Activated CD4-positive, alpha-beta memory T cell treated with anti-CD3 and anti-CD28 coated beads, Interleukin-2, amount 10 ng/mL, durations not matched to agents 7 days and 5 days (primary cell): ENCODE measurements at regions of chr2 and their contacts with region 1.

Region 1: GRCh38 chr2:68196120-68196716 is 38.5 kb downstream of the PNO1 start:
- DNase-seq: peak; percentile 31
- H3K4me3 Mint-ChIP-seq: no peak overlapping the region
- H3K27ac Mint-ChIP-seq: no peak overlapping the region
- H3K4me1 Mint-ChIP-seq: peaks cover 32% of the 10 kb centered on the region
- H3K27me3 Mint-ChIP-seq: no peaks in the 10 kb centered on the region

Region 2: DNA sequence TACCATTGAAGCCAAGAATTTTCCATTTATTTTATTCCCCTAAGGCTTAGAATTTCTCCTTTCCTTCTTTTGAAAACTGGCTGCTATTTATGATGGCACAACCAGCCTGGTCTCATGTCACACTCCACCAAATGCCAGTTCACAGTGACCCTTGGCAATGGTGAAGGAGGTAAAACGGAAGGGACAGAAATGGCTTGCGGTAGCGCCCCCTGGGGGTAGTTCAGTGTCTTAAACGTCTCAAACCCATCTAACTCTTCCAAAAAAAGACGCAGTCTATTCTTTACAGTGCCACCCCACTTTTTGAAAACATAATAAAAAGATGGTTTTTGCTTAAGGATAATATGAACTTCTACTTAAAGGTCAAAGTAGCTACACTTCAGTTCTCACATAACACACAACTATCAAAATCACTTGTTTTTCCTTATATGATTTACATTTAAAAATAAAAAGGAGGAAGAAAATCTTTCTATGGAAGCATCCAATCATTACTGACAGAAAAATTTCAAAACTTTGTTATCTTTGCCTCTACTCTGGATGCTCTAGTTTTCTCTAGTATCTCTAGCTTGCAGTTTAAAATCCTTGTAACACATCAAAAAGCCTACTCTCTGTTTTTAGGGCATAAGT is 10.6 kb before region 1 on chr2:
- CTCF ChIA-PET with region 1: interaction called, 22 read pairs
- POLR2A ChIA-PET with region 1: interaction called, 3 read pairs
- DNase-seq: peak; percentile 58
- H3K4me3 Mint-ChIP-seq: no peak overlapping the region
- H3K27ac Mint-ChIP-seq: no peak overlapping the region
- H3K4me1 Mint-ChIP-seq: peaks cover 24% of the 10 kb centered on the region
- H3K27me3 Mint-ChIP-seq: no peaks in the 10 kb centered on the region

Region 3: GRCh38 chr2:68225119-68225632 is 29.0 kb after region 1 on chr2:
- CTCF ChIA-PET with region 1: interaction called, 17 read pairs
- POLR2A ChIA-PET with region 1: no interaction called
- DNase-seq: no peak
- H3K4me3 Mint-ChIP-seq: no peak overlapping the region
- H3K27ac Mint-ChIP-seq: no peak overlapping the region
- H3K4me1 Mint-ChIP-seq: peaks cover 36% of the 10 kb centered on the region
- H3K27me3 Mint-ChIP-seq: no peaks in the 10 kb centered on the region

Region 4: DNA sequence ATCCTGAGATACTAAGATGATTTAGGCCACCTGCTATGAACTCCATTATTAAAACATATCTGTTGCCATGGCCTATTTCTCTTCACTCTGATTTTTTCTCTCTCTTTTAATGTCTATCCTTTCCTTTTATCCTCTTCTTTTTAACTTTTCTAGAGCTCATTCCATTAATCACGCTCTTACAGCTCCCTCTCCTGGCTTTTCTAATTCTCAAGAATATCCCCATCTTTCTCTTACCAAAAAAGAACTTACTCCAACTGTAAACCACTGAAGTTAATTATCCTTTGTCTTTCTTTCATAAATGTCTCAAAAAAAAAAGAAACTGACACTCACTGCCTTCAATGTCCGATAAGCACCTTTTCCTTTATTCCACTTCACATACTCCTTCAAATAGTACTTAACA is 48.2 kb after region 1 on chr2:
- CTCF ChIA-PET with region 1: interaction called, 28 read pairs
- POLR2A ChIA-PET with region 1: interaction called, 3 read pairs
- DNase-seq: no peak
- H3K4me3 Mint-ChIP-seq: no peak overlapping the region
- H3K27ac Mint-ChIP-seq: no peak overlapping the region
- H3K4me1 Mint-ChIP-seq: peaks cover 20% of the 10 kb centered on the region
- H3K27me3 Mint-ChIP-seq: no peaks in the 10 kb centered on the region

Region 5: GRCh38 chr2:68251187-68251854 is 55.1 kb after region 1 on chr2:
- CTCF ChIA-PET with region 1: interaction called, 28 read pairs
- POLR2A ChIA-PET with region 1: interaction called, 5 read pairs
- DNase-seq: peak; percentile 83
- H3K4me3 Mint-ChIP-seq: peak overlapping the region; percentile 89
- H3K27ac Mint-ChIP-seq: peak overlapping the region; percentile 98
- H3K4me1 Mint-ChIP-seq: peaks cover 39% of the 10 kb centered on the region
- H3K27me3 Mint-ChIP-seq: no peaks in the 10 kb centered on the region

Region 6: GRCh38 chr2:68282811-68283418 is 86.7 kb after region 1 on chr2:
- CTCF ChIA-PET with region 1: interaction called, 41 read pairs
- POLR2A ChIA-PET with region 1: interaction called, 3 read pairs
- DNase-seq: peak; percentile 17
- H3K4me3 Mint-ChIP-seq: no peak overlapping the region
- H3K27ac Mint-ChIP-seq: no peak overlapping the region
- H3K4me1 Mint-ChIP-seq: no peaks in the 10 kb centered on the region
- H3K27me3 Mint-ChIP-seq: peaks cover 21% of the 10 kb centered on the region